MCF 10A (cell line): ENCODE measurements at regions of chr1 and their contacts with region 1.

Region 1: DNA sequence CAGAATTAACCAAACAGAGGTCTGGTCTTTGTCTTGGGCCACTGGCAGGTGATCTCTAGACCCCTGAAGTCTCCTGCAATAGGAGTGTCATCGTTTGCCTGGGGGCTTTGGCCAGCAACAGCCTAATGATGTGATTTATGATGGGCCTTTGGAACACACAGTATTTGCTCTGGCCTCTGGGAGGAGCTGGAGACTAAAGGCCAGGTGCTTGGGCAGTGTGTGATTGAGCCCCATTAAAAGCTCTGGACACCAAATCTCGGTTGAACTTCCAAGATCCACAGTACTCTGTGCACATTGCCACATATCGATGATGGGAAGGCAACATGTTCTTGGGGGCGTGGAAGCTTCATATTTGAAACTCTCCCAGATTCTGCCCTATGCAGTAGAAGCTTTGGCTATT is 32.0 kb upstream of the TLR5 start:
- DNase-seq: peak; percentile 80
- H3K4me3 Mint-ChIP-seq: no peak overlapping the region
- H3K27ac Mint-ChIP-seq: no peak overlapping the region
- H3K4me1 Mint-ChIP-seq: peaks cover 10% of the 10 kb centered on the region
- H3K27me3 Mint-ChIP-seq: no peaks in the 10 kb centered on the region
- CTCF ChIP-seq: peak; percentile 71

Region 2: GRCh38 chr1:223358826-223359225 is 183.8 kb after region 1 on chr1:
- CTCF ChIA-PET with region 1: interaction called, 9 read pairs
- POLR2A ChIA-PET with region 1: no interaction called
- intact Hi-C with region 1: loop called (anchors 1 kb)
- DNase-seq: peak; percentile 58
- H3K4me3 Mint-ChIP-seq: no peak overlapping the region
- H3K27ac Mint-ChIP-seq: no peak overlapping the region
- H3K4me1 Mint-ChIP-seq: peaks cover 7% of the 10 kb centered on the region
- H3K27me3 Mint-ChIP-seq: peaks cover 51% of the 10 kb centered on the region
- CTCF ChIP-seq: peak; percentile 24

Region 3: DNA sequence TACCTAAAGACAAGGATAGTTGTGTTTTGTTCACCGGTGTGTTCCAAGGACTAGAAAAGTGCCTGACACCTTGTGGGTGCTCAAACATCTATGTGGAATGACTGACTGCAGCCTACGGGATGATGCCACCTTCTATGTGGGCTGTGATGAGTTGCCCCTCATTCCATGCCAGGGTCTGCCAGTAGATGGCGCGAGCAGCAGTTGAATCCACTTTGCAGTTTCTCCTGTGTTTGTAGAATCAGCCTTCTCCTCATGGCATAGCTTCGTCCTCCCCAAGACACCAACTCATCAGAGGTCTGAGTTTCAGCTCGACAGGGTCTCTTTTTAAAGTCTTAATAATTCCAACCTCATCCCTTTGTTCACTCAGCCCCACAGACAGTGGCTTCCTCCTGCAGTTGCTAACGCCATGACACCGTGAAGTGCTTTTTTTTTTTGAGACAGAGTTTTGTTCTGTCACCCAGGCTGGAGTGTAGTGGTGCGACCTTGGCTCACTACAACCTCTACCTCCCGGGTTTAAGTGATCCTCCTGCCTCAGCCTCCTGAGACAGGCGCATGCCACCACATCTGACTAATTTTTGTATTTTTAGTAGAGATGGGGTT is 356.8 kb after region 1 on chr1:
- CTCF ChIA-PET with region 1: interaction called, 4 read pairs
- POLR2A ChIA-PET with region 1: no interaction called
- intact Hi-C with region 1: loop called (anchors 1 kb)
- DNase-seq: peak; percentile 87
- H3K4me3 Mint-ChIP-seq: no peak overlapping the region
- H3K27ac Mint-ChIP-seq: no peak overlapping the region
- H3K4me1 Mint-ChIP-seq: no peaks in the 10 kb centered on the region
- H3K27me3 Mint-ChIP-seq: peaks cover 24% of the 10 kb centered on the region
- CTCF ChIP-seq: peak; percentile 90

Region 4: DNA sequence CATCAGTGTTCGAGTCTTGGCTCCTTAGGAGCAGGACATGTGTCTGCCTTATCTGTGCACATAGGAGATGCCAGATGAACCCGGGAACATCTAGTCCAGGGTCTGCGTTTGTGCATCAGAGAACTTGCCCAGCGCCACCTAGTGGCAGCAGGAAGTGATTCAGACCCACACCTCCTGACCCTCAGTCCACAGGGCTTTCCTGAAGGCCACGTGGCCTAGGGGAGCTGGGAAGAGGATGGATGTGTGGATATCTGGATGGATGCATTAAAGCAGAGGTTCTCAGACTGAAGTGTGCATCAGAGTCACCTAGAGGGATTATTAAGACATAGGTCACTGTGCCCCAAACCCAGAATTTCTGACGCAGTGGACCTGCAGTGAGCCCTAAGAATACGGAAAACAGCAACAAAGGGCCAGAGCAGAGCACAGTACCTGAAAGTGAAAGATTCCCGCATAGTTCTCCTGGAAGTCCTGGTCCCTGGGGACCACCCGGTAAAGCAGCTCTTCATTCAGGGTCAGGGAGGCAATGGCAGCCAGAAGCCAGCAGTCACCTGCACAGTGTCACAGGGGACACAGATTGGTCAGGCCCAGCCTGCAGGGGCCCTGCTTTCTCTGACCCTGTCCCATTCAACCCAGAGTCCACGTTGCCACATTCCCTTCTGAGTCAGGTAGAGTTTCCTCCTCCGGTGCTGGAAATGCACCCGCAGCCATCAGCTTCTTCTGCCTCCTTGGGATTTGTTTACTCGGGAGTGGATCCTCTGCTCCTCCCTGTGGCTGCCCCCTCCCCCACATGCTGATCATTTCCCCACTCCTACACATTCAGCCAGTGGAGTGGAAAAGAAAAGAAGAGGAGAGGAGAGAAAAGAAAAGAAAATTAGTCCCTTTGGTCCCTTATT is 453.4 kb after region 1 on chr1:
- CTCF ChIA-PET with region 1: interaction called, 3 read pairs
- POLR2A ChIA-PET with region 1: no interaction called
- intact Hi-C with region 1: loop called (anchors 1 kb)
- DNase-seq: peak; percentile 72
- H3K4me3 Mint-ChIP-seq: no peak overlapping the region
- H3K27ac Mint-ChIP-seq: no peak overlapping the region
- H3K4me1 Mint-ChIP-seq: no peaks in the 10 kb centered on the region
- H3K27me3 Mint-ChIP-seq: no peaks in the 10 kb centered on the region
- CTCF ChIP-seq: peak; percentile 85

Region 5: GRCh38 chr1:223670458-223671168 is 495.6 kb after region 1 on chr1:
- CTCF ChIA-PET with region 1: no interaction called
- POLR2A ChIA-PET with region 1: no interaction called
- intact Hi-C with region 1: loop called (anchors 1 kb)
- DNase-seq: peak; percentile 87
- H3K4me3 Mint-ChIP-seq: no peak overlapping the region
- H3K27ac Mint-ChIP-seq: no peak overlapping the region
- H3K4me1 Mint-ChIP-seq: peaks cover 22% of the 10 kb centered on the region
- H3K27me3 Mint-ChIP-seq: no peaks in the 10 kb centered on the region
- CTCF ChIP-seq: peak; percentile 97

Region 6: GRCh38 chr1:223683586-223684487 is 508.8 kb after region 1 on chr1:
- CTCF ChIA-PET with region 1: interaction called, 6 read pairs
- POLR2A ChIA-PET with region 1: no interaction called
- intact Hi-C with region 1: loop called (anchors 1 kb)
- DNase-seq: peak; percentile 85
- H3K4me3 Mint-ChIP-seq: no peak overlapping the region
- H3K27ac Mint-ChIP-seq: no peak overlapping the region
- H3K4me1 Mint-ChIP-seq: peaks cover 6% of the 10 kb centered on the region
- H3K27me3 Mint-ChIP-seq: no peaks in the 10 kb centered on the region
- CTCF ChIP-seq: peak; percentile 94